AG04449 (cell line): ENCODE measurements at regions of chr10 and their contacts with region 1.

Region 1: DNA sequence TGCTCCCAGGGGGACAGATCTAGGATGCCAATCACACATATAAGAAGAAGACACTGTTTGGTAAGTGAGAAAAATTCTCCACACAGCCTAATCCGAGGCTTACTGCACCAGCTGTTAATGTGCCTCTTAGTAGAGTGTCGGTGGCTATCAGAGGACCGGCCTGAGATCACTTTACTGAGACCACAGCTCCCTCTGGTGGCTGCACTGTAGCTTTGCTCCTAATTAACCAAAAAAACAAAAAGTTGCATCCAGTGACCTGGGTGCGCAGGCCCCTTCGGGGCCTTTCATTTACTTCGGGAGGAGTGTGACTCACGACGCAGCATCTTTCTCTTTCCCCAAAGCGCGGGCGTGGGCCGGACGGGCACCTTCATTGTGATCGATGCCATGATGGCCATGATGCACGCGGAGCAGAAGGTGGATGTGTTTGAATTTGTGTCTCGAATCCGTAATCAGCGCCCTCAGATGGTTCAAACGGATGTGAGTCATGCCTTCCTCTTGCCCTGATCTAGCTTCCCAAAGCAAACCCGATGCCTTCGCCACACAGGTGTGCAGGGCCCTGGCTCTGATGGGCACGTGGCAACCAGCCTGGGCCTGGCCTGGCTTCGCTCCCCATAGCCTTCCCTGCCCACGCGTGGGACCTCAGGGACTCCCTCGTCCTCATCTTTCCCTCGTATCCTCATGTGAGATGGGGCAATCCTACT is 56.7 kb downstream of the MKI67 start:
- DNase-seq: peak; percentile 16
- H3K4me3 ChIP-seq: no peak overlapping the region
- CTCF ChIP-seq: peak; percentile 75

Region 2: DNA sequence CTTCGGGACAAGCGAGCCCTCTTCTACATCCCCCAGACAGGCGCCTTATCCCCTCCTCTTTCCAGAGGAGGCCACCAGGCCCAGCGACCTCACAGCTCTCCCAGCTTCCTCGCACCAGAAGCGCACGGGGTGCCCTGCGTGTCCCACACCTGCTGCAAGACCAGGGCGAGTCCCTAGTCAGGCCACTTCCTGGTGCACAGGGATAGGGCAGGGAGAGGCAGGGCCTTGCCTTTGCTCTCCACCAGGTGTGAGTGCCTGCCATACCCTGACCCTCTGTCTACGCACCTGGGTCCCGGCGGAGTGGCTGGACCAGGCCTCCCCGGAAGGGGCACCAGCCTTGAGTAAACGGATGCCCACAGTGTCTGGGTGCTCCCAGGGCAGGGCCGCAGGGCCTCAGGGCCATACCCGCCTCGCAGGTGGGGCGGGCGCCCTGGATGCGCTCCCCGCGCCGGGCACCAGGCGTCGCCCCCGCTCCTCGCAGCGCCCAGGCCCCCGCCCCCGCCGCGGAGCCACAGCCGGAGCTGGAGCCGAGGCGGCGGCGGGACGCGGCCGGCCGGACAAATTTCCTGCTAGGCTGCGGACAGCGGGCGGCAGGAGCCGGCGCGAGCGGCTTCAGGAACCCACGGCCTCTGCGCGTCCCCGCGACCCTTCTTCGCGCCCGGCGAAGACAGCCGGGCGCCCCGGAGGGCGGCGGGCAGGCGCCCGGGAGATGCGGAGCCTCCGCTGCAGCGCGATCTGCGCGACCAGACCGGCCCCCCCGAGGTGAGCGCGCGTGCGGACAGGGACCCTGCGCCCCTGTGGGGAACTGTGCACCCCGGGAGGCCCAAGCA is 162.7 kb before region 1 on chr10 and contains the start of gene PTPRE:
- CTCF ChIA-PET with region 1: interaction called, 25 read pairs
- POLR2A ChIA-PET with region 1: no interaction called
- DNase-seq: no peak
- H3K4me3 ChIP-seq: no peak within 1 kb of the TSS
- CTCF ChIP-seq: peak; percentile 44

Region 3: DNA sequence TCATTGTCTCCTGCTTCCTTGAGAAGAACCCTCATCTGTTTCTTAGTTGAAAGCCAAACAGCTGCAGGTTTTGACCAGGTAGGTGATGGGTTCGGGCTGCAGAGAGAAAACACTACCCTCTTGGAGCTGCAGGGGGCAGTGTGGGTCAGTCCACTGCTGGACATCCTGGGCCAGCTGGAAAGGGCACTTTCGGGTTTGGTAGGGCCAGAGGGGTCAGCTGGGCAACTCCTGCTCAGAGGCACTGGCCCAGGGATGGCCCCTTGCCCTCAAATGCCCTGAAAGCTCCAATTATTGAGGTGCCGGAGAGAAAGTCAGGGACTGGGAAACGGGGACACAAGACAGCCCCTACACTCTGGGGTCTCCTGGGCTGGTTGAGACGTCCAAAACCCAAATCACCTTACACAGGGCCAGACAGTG is 33.9 kb before region 1 on chr10:
- CTCF ChIA-PET with region 1: interaction called, 59 read pairs
- POLR2A ChIA-PET with region 1: no interaction called
- DNase-seq: no peak
- H3K4me3 ChIP-seq: no peak overlapping the region
- CTCF ChIP-seq: peak; percentile 75

Region 4: DNA sequence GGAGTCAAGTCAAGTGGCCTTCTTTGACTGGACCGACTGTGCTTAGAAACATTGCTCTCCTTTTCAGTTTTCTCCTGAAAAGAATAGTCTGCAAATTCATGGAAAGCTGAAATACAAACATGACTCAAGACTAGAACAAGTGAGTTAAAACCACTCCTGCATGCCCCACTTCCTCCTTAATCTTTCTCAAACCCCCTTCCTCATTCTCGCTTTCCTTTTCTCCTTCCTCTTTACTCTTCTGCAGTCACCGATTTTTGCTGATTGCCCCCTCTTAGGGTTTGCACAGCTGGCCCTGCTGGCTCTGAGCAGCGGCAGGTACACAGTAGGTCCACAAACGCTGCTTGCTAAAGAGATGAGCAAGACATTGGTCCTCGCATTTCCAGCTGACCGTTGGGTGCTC is 91.5 kb after region 1 on chr10:
- CTCF ChIA-PET with region 1: no interaction called
- POLR2A ChIA-PET with region 1: no interaction called
- DNase-seq: no peak
- H3K4me3 ChIP-seq: no peak overlapping the region
- CTCF ChIP-seq: no peak